Psoas muscle (tissue), 8 donors: ENCODE measurements at regions of chr16 and their contacts with region 1.

Region 1: DNA sequence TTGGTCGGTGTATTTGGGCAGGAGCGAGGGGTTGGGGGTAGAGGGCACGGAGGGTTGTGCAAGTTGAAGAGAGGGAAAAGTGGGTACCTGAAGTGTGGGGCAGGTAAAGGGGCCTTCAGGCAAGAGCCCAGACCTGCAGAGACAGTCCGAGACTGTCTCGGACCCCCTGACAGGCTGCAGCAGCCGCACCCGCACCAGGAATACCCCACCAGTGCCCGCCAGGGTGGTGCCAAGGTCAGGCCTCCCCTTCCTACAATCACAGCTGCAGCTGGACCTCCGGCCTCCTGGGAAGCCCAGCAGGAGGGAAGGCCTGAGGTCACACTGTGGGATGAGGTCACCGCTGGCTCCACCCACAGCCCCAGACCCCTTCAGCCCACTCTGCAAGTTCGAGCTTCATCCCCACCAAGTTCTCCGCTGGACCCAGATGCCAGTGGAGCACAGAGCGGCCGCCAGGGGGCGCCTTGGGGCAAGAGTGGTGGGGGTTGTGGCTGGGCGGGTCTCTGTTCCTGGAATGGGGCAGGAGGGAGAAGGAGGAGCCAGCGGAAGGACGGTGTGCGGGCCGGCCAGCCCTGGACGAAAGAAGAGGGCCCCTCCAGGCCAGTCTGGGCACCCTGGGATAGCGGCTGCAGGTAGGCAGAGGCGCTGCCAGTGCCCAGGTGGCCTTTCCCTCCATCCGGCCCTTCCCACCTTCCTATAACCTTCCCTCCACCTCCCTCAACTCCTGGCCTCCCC is at the start of gene HSD3B7:
- DNase-seq: peak; percentile 92 to 94
- ATAC-seq: peak; percentile 88 to 95 (median 90)
- H3K4me3 ChIP-seq: peak within 1 kb of the TSS; percentile 67
- H3K27ac ChIP-seq: peak within 1 kb of the TSS; percentile 67
- H3K4me1 ChIP-seq: peaks cover 10% of the 10 kb centered on the region
- H3K27me3 ChIP-seq: no peaks in the 10 kb centered on the region
- CTCF ChIP-seq: peak; percentile 97
- total RNA-seq, gene HSD3B7: 3.2 to 12.8 (median 5.4) TPM

Region 2: DNA sequence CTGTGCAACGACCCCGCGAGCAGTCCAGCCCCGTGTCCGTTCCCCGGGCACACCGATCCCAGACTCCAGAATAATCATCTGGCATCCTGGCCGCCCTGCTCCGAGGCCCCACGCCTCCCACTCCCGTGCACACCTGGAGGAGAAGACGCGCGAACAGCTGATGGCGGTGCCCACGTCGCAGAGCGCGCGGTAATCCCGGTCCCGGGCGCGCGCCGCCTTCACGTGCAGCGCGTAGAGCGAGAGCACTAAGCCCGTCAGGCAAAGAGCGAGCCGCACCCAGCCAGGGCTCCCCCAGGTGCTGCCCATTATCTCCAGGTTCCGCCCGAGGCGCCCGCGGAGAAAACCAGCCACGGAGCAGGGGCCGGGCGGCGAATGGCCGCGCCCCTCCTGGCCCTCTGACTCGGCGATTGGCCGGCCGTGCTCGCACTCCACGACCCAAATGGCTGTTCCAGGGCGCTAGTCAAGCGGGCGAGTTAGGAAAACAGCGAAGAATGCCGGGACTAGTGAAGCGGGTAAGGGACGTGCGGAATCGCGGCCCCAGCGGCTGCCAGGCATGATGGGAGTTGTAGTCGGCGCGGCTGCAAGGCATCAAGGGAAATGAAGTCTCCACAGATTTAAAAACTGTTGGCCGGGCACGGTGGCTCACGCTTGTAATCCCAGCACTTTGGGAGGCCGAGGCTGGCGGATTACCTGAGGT is 109.7 kb after region 1 on chr16 and contains the start of gene VKORC1:
- intact Hi-C with region 1: loop called (anchors 2 to 10 kb)
- DNase-seq: peak; percentile 94 to 97
- ATAC-seq: peak; percentile 93 to 96 (median 94)
- H3K4me3 ChIP-seq: peak within 1 kb of the TSS; percentile 98
- H3K27ac ChIP-seq: peak within 1 kb of the TSS; percentile 94
- H3K4me1 ChIP-seq: peaks cover 4% of the 10 kb centered on the region
- H3K27me3 ChIP-seq: no peaks in the 10 kb centered on the region
- CTCF ChIP-seq: no peak
- total RNA-seq, gene VKORC1: 13.3 to 17.8 (median 16.5) TPM

Region 3: GRCh38 chr16:31142109-31143010 is 157.5 kb after region 1 on chr16:
- intact Hi-C with region 1: loop called (anchors 2 to 5 kb)
- DNase-seq: peak; percentile 99
- ATAC-seq: peak; percentile 91 to 95 (median 93)
- H3K4me3 ChIP-seq: peak overlapping the region; percentile 70
- H3K27ac ChIP-seq: peak overlapping the region; percentile 82
- H3K4me1 ChIP-seq: peaks cover 23% of the 10 kb centered on the region
- H3K27me3 ChIP-seq: no peaks in the 10 kb centered on the region
- CTCF ChIP-seq: peak; percentile 93

Region 4: DNA sequence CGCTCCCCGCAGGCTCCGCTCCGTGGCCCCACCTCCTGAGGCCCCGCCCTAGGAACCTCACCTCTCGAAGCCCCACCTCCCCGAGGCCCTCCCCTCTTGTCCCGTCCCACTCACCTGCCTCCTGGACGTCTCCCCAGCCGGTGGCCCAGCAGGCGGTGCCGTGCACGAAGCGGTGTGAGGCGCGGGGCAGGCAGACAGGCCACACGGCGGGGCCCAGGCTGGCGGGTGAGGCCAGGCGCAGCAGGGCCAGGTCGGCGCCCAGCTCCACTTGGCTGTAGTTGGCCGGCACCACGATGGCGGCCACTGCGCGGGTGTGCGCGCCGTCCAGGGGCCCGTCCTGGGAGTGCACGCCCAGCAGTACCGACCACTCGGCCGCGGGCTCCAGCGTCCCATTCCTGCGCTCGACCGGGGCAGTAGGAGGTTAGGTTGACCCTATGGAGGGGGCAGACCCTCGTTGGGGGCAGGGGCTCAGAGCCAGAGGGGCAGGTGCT is 163.5 kb after region 1 on chr16:
- intact Hi-C with region 1: loop called (anchors 2 to 5 kb)
- DNase-seq: no peak
- ATAC-seq: no peak
- H3K4me3 ChIP-seq: no peak overlapping the region
- H3K27ac ChIP-seq: no peak overlapping the region
- H3K4me1 ChIP-seq: no peaks in the 10 kb centered on the region
- H3K27me3 ChIP-seq: peaks cover 0 to 5% (median 5%) of the 10 kb centered on the region in 3 donors
- CTCF ChIP-seq: no peak

Region 5: DNA sequence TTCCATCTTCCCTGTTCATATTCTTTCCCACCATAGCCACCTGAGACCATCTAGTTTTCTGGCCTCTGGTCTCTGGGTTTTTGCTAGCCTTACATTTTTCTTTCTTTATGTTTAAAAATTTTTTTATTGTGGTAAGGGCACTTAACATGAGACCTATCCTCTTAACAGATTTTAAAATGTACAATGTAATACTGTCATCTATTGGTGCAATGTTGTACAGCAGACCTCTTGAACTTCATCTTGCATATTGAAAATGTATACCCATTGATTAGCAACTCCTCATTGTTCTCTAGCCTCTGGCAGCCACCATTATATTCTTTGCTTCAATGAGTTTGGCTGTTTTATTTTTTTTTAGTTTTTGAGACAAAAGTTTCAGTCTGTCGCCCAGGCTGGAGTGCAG is 314.1 kb after region 1 on chr16:
- intact Hi-C with region 1: loop called in 1 of 2 experiments (anchors 10 kb)
- DNase-seq: no peak
- ATAC-seq: no peak
- H3K4me3 ChIP-seq: no peak overlapping the region
- H3K27ac ChIP-seq: no peak overlapping the region
- H3K4me1 ChIP-seq: no peaks in the 10 kb centered on the region
- H3K27me3 ChIP-seq: no peaks in the 10 kb centered on the region
- CTCF ChIP-seq: peak; percentile 32

Region 6: GRCh38 chr16:31440516-31441184 is 455.8 kb after region 1 on chr16:
- intact Hi-C with region 1: loop called (anchors 2 to 5 kb)
- DNase-seq: peak in 1 of 2 donors; percentile 3
- ATAC-seq: no peak
- H3K4me3 ChIP-seq: no peak overlapping the region
- H3K27ac ChIP-seq: peak overlapping the region; percentile 94
- H3K4me1 ChIP-seq: peaks cover 19% of the 10 kb centered on the region
- H3K27me3 ChIP-seq: no peaks in the 10 kb centered on the region
- CTCF ChIP-seq: no peak

Region 7: DNA sequence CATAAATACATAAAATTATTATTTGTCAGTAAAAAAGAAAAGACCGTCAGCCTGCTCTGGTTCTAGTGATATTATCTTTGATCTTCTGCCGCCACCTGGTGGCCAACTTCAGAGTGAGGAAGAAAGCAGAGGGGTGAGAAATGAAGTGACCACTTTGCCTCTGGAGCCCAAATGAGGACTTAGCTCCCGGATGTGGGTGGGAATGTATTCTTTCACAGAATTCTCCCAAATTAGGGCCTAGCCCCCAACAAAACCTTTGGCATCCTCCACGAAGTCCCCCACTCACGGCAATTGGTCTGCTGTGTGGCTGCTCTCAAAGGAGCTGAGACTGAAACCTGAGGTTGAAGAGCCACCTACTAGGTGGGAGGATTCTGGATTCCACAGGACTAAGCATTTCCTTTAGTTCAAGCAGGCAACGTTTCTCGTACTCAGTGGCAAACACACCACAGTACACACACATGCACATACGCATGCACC is 883.9 kb after region 1 on chr16:
- intact Hi-C with region 1: loop called (anchors 5 kb)
- DNase-seq: peak; percentile 71 to 83
- ATAC-seq: peak; percentile 61 to 78 (median 66)
- H3K4me3 ChIP-seq: no peak overlapping the region
- H3K27ac ChIP-seq: no peak overlapping the region
- H3K4me1 ChIP-seq: no peaks in the 10 kb centered on the region
- H3K27me3 ChIP-seq: no peaks in the 10 kb centered on the region
- CTCF ChIP-seq: peak; percentile 88